Psoas muscle (tissue), 8 donors: ENCODE measurements at regions of chr13 and their contacts with region 1.

Region 1: GRCh38 chr13:27712421-27712820 is 79.9 kb upstream of the GSX1 start:
- DNase-seq: no peak
- ATAC-seq: peak in 2 of 4 donors; percentile 47 to 73
- H3K4me3 ChIP-seq: no peak overlapping the region
- H3K27ac ChIP-seq: no peak overlapping the region
- H3K4me1 ChIP-seq: no peaks in the 10 kb centered on the region
- H3K27me3 ChIP-seq: peaks cover 0 to 18% (median 0%) of the 10 kb centered on the region in 3 donors
- CTCF ChIP-seq: peak; percentile 34

Region 2: GRCh38 chr13:27374650-27375049 is 337.8 kb before region 1 on chr13:
- intact Hi-C with region 1: loop called in 1 of 2 experiments (anchors 10 kb)
- DNase-seq: peak; percentile 31 to 62
- ATAC-seq: peak; percentile 93 to 99 (median 96)
- H3K4me3 ChIP-seq: no peak overlapping the region
- H3K27ac ChIP-seq: no peak overlapping the region
- H3K4me1 ChIP-seq: no peaks in the 10 kb centered on the region
- H3K27me3 ChIP-seq: peaks cover 0 to 13% (median 2%) of the 10 kb centered on the region in 3 donors
- CTCF ChIP-seq: peak; percentile 78

Region 3: GRCh38 chr13:28468023-28468915 is 755.8 kb after region 1 on chr13:
- intact Hi-C with region 1: no loop called
- DNase-seq: no peak
- ATAC-seq: no peak
- H3K4me3 ChIP-seq: no peak overlapping the region
- H3K27ac ChIP-seq: no peak overlapping the region
- H3K4me1 ChIP-seq: no peaks in the 10 kb centered on the region
- H3K27me3 ChIP-seq: peaks cover 0 to 2% (median 0%) of the 10 kb centered on the region in 3 donors
- CTCF ChIP-seq: no peak